ENCODE measurements at regions of chr17 and their contacts with region 1.

Region 1: GRCh38 chr17:56715613-56716357 is 117.9 kb downstream of the C17orf67 start:
- DNase-seq: peak; percentile 84
- ATAC-seq: peak; percentile 92
- H3K4me3 Mint-ChIP-seq: no peak overlapping the region
- H3K27ac Mint-ChIP-seq: no peak overlapping the region
- H3K4me1 Mint-ChIP-seq: no peaks in the 10 kb centered on the region
- H3K27me3 Mint-ChIP-seq: no peaks in the 10 kb centered on the region

Region 2: GRCh38 chr17:56581635-56582627 is 133.9 kb before region 1 on chr17:
- CTCF ChIA-PET with region 1: interaction called, 14 read pairs
- POLR2A ChIA-PET with region 1: no interaction called
- DNase-seq: no peak
- ATAC-seq: no peak
- H3K4me3 Mint-ChIP-seq: no peak overlapping the region
- H3K27ac Mint-ChIP-seq: no peak overlapping the region
- H3K4me1 Mint-ChIP-seq: no peaks in the 10 kb centered on the region
- H3K27me3 Mint-ChIP-seq: peaks cover 21% of the 10 kb centered on the region

Region 3: GRCh38 chr17:56602292-56603130 is 113.3 kb before region 1 on chr17:
- CTCF ChIA-PET with region 1: interaction called, 26 read pairs
- POLR2A ChIA-PET with region 1: no interaction called
- DNase-seq: no peak
- ATAC-seq: no peak
- H3K4me3 Mint-ChIP-seq: no peak overlapping the region
- H3K27ac Mint-ChIP-seq: no peak overlapping the region
- H3K4me1 Mint-ChIP-seq: peaks cover 26% of the 10 kb centered on the region
- H3K27me3 Mint-ChIP-seq: peaks cover 19% of the 10 kb centered on the region

Region 4: GRCh38 chr17:56679115-56679766 is 36.5 kb before region 1 on chr17:
- CTCF ChIA-PET with region 1: interaction called, 54 read pairs
- POLR2A ChIA-PET with region 1: no interaction called
- DNase-seq: no peak
- ATAC-seq: no peak
- H3K4me3 Mint-ChIP-seq: no peak overlapping the region
- H3K27ac Mint-ChIP-seq: no peak overlapping the region
- H3K4me1 Mint-ChIP-seq: peaks cover 19% of the 10 kb centered on the region
- H3K27me3 Mint-ChIP-seq: peaks cover 55% of the 10 kb centered on the region

Region 5: DNA sequence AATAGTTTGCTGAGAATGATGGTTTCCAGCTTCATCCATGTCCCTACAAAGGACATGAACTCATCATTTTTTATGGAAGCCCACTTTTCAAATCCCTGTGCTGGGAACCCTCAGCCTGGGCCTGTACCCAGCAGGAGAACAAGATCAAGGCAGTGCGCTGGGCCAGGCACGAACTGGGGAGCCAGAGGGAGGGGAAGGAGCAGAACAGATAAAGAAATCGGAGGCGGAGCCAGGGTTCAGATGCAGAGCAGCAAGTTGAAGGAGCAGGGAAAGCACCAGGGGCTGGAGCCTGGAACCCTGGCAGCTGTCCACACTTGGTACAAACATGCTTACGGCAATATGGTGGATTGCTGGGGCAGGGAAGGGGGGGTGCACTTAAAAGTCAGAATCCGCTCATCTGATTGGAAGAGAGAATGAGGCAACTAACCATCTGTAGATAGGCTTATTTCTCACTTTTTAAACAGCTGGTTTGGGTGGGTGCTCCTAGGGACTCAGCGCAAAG is 14.8 kb before region 1 on chr17:
- CTCF ChIA-PET with region 1: interaction called, 20 read pairs
- POLR2A ChIA-PET with region 1: no interaction called
- DNase-seq: no peak
- ATAC-seq: no peak
- H3K4me3 Mint-ChIP-seq: no peak overlapping the region
- H3K27ac Mint-ChIP-seq: no peak overlapping the region
- H3K4me1 Mint-ChIP-seq: no peaks in the 10 kb centered on the region
- H3K27me3 Mint-ChIP-seq: peaks cover 7% of the 10 kb centered on the region

Region 6: GRCh38 chr17:56762988-56763387 is 47.2 kb after region 1 on chr17:
- CTCF ChIA-PET with region 1: interaction called, 17 read pairs
- POLR2A ChIA-PET with region 1: interaction called, 3 read pairs
- DNase-seq: no peak
- ATAC-seq: peak; percentile 70
- H3K4me3 Mint-ChIP-seq: no peak overlapping the region
- H3K27ac Mint-ChIP-seq: peak overlapping the region; percentile 56
- H3K4me1 Mint-ChIP-seq: peaks cover 12% of the 10 kb centered on the region
- H3K27me3 Mint-ChIP-seq: no peaks in the 10 kb centered on the region

Region 7: DNA sequence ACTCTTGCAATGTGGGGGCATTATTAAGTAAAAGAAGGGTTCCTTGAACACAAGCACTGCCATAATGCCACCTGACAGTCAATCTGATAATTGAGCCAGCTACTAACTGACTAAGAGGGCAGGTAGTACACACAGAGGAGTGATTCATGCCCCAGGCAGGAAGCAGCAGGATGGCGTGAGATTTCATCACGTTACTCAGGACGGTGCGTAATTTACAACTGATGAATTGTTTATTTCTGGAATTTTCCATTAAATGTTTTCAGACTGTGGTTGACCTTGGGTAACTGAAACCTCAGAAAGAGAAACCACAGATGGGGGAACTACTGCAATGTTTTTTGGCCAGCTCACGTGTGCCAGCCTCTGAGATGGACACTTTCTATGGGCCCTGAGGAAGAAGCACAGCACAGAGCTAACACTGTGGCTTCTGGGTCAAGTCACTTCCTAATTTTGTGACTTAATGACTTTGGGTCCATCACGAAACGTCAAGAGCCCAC is 71.3 kb after region 1 on chr17:
- CTCF ChIA-PET with region 1: interaction called, 82 read pairs
- POLR2A ChIA-PET with region 1: no interaction called
- DNase-seq: peak; percentile 65
- ATAC-seq: peak; percentile 92
- H3K4me3 Mint-ChIP-seq: no peak overlapping the region
- H3K27ac Mint-ChIP-seq: peak overlapping the region; percentile 75
- H3K4me1 Mint-ChIP-seq: peaks cover 25% of the 10 kb centered on the region
- H3K27me3 Mint-ChIP-seq: peaks cover under 1% of the 10 kb centered on the region

Measured in activated CD8-positive, alpha-beta T cell treated with anti-CD3 and anti-CD28 coated beads, Interleukin-2, amount 10 ng/mL, durations not matched to agents 7 days and 5 days (primary cell).